Posterior vena cava (tissue), 2 donors: ENCODE measurements at regions of chr18 and their contacts with region 1.

Region 1: GRCh38 chr18:79834834-79835233 is 37.1 kb downstream of the KCNG2 start:
- DNase-seq: no peak

Region 2: GRCh38 chr18:79788096-79789085 is 46.4 kb before region 1 on chr18:
- intact Hi-C with region 1: no loop called
- DNase-seq: peak; percentile 80

Region 3: DNA sequence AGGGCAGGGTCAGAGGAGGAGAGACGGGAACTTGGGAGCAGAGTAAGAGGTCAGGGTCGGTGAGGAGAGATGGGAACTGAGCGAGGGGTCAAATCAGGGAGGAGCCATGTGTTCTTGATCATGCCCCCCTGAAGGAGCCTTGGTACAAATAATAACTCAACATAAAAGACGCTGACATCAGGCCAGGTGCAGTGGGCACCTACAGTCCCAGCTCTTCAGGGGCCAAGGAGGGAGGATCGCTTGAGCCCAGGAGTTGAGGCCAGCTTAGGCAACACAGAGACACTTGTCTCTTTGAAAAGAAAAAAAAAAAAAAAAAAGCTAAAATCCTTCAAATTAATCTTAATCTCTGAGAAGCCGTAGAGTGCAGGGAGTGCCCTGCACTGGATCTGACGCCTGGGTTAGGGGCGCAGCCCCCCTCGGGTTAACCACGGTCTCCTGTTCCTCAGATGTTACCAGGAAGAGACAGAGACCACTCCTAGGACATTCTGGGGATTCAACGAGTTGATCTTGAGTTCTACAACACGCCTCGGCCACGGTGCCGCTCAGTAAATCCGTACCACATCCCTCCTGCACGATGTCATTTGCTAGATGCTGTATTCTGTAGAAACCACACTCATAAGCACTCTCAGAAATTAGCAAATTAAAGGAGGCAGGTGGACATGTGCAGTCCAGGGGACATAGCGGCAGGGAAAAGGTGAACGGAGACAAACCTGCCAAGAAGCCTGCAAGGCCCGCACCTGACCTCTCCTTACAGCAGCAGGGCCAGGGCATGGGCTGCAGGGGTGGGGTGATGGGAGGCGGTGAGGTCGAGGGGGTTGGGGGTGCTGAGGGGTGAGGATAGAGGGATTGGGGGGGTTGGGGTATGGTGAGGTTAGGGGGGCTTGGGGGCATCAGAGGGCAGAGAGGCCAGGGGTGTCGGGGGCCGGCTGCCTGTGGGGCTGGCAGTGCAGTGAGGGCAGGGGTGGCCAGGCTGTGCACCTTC is 87.4 kb after region 1 on chr18:
- intact Hi-C with region 1: loop called in 1 of 2 experiments (anchors 1 kb)
- DNase-seq: peak; percentile 51